A549 (cell line): ENCODE measurements at regions of chr2 and their contacts with region 1.

Region 1: GRCh38 chr2:85302121-85302520 is 25.7 kb downstream of the TGOLN2 start:
- DNase-seq: no peak
- ATAC-seq: no peak; a peak in 1 of 6 replicates
- H3K4me3 ChIP-seq: no peak overlapping the region
- H3K27ac ChIP-seq: no peak overlapping the region
- H3K4me1 ChIP-seq: no peaks in the 10 kb centered on the region
- CTCF ChIP-seq: no peak
- EP300 ChIP-seq: no peak
- POLR2A ChIP-seq: no peak
- RAD21 ChIP-seq: no peak

Region 2: DNA sequence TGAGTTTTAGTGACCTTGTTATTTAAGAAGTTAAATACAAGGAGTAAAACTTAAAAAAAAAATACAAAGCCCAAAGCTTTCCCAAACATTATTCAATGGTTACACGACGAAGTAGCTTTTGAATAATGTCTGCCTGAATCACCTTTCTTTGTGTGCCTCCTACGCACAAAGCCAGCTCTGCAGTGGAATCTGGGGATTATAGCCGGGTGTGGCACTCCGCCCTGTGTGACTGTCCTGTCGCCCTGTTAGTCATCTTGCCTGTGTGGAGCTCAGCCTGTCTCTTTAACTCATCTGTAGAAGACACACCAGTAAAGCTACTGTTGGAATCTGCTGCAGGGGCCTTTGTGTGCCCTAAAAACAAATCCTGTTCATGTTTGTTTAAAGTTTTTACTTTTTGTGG is 248.3 kb before region 1 on chr2:
- CTCF ChIA-PET with region 1: interaction called, 371 read pairs
- POLR2A ChIA-PET with region 1: interaction called, 4 read pairs
- DNase-seq: peak; percentile 60 to 83
- ATAC-seq: peak; percentile 81 to 88
- H3K4me3 ChIP-seq: no peak overlapping the region
- H3K27ac ChIP-seq: peak overlapping the region; percentile 44 to 53; a peak in 5 of 6 replicates
- H3K4me1 ChIP-seq: peaks cover 27% of the 10 kb centered on the region
- CTCF ChIP-seq: no peak
- EP300 ChIP-seq: no peak
- POLR2A ChIP-seq: no peak
- RAD21 ChIP-seq: no peak

Region 3: GRCh38 chr2:85132834-85133637 is 169.1 kb before region 1 on chr2 and contains the start of gene TCF7L1:
- CTCF ChIA-PET with region 1: interaction called, 59 read pairs
- POLR2A ChIA-PET with region 1: no interaction called
- DNase-seq: peak; percentile 89 to 93
- ATAC-seq: peak; percentile 87 to 96
- H3K4me3 ChIP-seq: peak within 1 kb of the TSS; percentile 61
- H3K27ac ChIP-seq: peak within 1 kb of the TSS; percentile 76 to 90
- H3K4me1 ChIP-seq: peaks cover 9% of the 10 kb centered on the region
- CTCF ChIP-seq: peak; percentile 78
- EP300 ChIP-seq: no peak
- POLR2A ChIP-seq: peak; percentile 70
- RAD21 ChIP-seq: peak; percentile 72 to 86
- polyA plus RNA-seq, gene TCF7L1: 0.68 and 0.95 TPM in 2 replicates

Region 4: DNA sequence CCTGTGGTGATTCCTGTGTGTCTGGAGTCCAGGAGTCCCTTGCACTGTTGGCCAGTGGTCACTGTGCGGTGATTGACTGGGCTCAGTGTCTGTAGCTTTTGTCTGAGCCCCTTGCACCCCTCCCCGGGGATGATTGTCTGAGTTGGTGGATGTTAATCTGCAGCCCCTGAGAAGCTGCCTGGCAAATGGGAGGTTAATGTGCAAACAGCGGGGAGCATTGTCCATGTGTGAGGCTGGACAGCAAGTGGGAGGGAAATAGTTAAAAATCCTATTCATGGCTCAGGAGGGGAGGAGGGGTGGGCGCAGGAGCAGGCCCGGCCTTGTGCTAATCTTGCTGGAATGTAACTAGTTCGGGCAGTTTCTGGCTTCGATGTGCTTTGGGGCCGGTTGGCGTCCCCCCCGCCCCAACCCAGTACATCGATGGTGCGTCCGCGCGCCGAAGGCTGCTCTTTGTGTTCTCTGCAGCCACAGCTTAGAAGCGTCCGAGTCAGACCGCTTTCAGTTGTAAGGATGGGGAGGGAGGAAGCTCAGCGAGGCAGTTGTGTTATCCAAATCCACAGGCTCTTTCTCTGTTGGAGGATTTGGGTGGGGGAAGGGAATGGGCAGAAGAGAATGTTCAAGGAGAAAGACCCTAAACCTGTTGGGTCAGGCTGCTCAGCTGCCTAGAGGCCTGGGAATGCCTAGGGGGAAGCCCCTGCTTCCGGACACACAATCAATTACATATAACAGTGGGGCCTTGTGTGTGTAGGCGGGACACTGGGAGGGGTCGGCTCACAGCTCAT is 46.1 kb before region 1 on chr2:
- CTCF ChIA-PET with region 1: interaction called, 22 read pairs
- POLR2A ChIA-PET with region 1: no interaction called
- DNase-seq: no peak
- ATAC-seq: no peak
- H3K4me3 ChIP-seq: no peak overlapping the region
- H3K27ac ChIP-seq: no peak overlapping the region
- H3K4me1 ChIP-seq: no peaks in the 10 kb centered on the region; the same call in 2 of the 3 replicates
- CTCF ChIP-seq: no peak
- EP300 ChIP-seq: no peak
- POLR2A ChIP-seq: no peak
- RAD21 ChIP-seq: no peak

Region 5: DNA sequence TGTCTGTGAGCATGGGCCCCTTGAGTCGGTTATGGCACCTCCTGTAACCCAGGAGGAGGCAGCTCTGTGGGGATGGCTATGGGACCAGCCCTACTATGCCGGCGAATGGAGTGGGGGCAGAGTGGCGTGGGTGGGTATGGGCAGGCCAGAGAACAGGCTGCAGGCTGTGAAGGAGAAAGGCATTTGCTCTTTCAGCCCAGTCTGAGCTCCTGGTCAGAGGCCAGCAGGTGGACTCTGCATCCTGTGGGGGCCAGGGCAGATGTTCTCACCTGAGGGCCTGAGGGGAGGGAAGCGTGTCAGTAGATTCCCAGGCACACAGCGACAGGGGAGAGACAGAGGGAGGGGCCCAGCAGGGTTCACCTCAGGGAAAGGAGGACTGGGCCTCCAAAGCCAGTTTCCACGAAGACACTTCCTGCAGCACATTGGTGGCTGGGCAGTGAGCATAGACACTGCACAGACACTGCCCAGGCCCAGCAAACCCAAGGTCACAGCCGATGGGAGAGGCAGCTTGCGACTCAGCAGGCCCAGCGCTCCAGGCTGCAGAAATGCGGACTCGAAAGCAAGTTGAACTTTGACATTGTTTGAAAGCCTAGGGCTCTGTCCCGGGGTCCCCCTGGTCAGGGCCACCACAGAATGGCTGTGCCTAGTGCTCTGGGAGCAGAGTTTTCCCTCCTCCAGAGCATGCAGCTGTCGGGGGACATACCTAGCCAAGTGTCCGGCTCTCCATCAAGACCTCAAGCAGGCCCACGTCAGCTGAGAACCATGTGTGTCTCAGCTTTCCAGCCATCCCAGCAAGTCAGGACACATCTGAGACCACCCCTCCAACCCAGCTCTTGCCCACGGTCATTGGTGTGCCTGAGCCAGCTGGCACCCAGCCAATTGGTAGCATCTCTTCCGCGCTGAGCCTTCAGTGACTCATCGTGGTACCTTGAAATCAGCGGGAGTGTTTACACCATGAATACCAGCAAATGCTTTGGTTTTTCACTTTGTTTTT is 28.1 kb before region 1 on chr2:
- CTCF ChIA-PET with region 1: interaction called, 56 read pairs
- POLR2A ChIA-PET with region 1: no interaction called
- DNase-seq: peak in 1 of 2 experiments; percentile 62
- ATAC-seq: peak; percentile 67 to 69
- H3K4me3 ChIP-seq: no peak overlapping the region
- H3K27ac ChIP-seq: no peak overlapping the region
- H3K4me1 ChIP-seq: peaks cover 13% of the 10 kb centered on the region
- CTCF ChIP-seq: no peak
- EP300 ChIP-seq: no peak
- POLR2A ChIP-seq: no peak
- RAD21 ChIP-seq: no peak

Region 6: DNA sequence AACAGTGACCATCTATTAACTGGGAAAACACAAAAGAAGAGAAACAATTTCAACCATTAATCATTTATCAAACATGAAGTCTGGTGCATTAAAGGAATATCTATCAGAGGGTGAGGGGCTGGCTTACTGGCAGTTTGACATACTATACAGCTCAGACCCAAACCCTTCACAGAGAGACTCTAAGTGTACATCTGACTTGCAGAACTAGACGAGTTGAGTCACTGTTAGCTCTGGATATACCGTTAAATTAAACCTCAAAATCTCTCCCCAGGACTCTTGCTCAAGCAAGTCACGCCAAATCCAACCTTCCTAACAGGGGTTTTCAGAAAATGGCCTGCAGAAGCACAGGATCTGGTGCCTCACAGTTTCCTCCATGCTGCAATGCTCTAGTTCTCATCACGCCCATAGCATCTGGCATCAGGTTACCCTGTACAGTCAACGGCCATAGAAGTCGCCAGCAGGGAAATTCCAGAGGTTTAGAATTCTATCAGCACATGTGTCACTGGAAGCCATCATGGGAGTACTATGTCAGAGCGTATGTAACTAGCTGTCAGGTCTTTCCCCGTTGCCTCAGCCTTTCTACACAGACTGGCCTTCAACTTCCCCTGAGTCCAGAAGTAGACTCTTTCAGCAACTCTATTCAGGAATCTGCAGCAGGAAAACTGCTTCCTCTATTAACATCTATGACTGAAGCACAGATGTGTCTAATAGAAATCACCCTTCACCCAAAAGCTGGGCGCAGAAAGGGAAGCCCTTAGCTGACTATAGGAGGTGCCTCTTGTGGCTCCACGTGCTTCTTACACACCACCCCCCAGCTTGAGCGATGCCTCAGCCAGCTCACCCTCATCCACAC is 16.3 kb after region 1 on chr2:
- CTCF ChIA-PET with region 1: interaction called, 48 read pairs
- POLR2A ChIA-PET with region 1: interaction called, 3 read pairs
- DNase-seq: no peak
- ATAC-seq: peak in 1 of 2 experiments; percentile 21; a peak in 1 of 6 replicates
- H3K4me3 ChIP-seq: no peak overlapping the region
- H3K27ac ChIP-seq: no peak overlapping the region
- H3K4me1 ChIP-seq: no peaks in the 10 kb centered on the region
- CTCF ChIP-seq: no peak
- EP300 ChIP-seq: no peak
- POLR2A ChIP-seq: no peak
- RAD21 ChIP-seq: no peak

Region 7: GRCh38 chr2:85409845-85410583 is 107.9 kb after region 1 on chr2 and contains the start of gene CAPG:
- CTCF ChIA-PET with region 1: no interaction called
- POLR2A ChIA-PET with region 1: no interaction called
- DNase-seq: peak in 1 of 2 experiments; percentile 55
- ATAC-seq: peak; percentile 31 to 59; a peak in 4 of 6 replicates
- H3K4me3 ChIP-seq: no peak within 1 kb of the TSS
- H3K27ac ChIP-seq: peak within 1 kb of the TSS; percentile 52 to 78
- H3K4me1 ChIP-seq: peaks cover 38% of the 10 kb centered on the region
- CTCF ChIP-seq: no peak
- EP300 ChIP-seq: no peak
- POLR2A ChIP-seq: peak; percentile 26
- RAD21 ChIP-seq: no peak
- polyA plus RNA-seq, gene CAPG: 81.0 and 94.6 TPM in 2 replicates

Region 8: GRCh38 chr2:85420536-85421259 is 118.6 kb after region 1 on chr2:
- CTCF ChIA-PET with region 1: no interaction called
- POLR2A ChIA-PET with region 1: no interaction called
- DNase-seq: peak; percentile 92 to 97
- ATAC-seq: peak; percentile 57 to 70
- H3K4me3 ChIP-seq: peak overlapping the region; percentile 16; the same call in 1 of the 3 replicates
- H3K27ac ChIP-seq: peak overlapping the region; percentile 96 to 98
- H3K4me1 ChIP-seq: peaks cover 44% of the 10 kb centered on the region
- CTCF ChIP-seq: peak; percentile 99
- EP300 ChIP-seq: no peak
- POLR2A ChIP-seq: no peak
- RAD21 ChIP-seq: peak; percentile 100

Region 9: DNA sequence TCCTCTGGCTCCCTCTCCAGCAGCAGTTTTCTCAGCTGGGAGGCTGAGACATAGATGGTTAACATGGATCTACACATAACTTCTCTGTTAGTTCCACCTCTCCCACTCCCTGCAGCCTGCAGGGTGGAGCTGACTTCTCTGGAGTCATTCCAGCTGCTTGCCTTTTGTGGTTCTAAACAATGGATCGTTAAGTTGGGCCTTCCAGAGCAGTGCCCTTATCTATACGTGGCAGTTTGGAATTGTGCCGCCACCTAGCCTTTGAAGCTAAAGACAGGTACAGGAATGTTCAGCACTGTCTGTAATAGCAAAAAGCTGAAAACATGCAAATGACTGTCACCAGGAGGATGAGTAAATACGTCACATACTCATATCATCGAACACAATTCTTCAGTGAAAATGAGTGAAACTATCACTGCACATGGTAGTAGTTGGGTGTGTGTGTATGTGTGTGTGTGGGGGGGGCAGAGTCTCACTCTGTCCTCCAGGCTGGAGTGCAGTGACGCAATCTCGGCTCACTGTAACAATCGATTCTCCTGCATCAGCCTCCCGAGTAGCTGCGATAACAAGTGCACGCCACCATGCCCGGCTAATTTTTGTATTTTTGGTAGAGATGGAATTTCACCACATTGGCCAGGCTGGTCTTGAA is 166.7 kb after region 1 on chr2:
- CTCF ChIA-PET with region 1: no interaction called
- POLR2A ChIA-PET with region 1: no interaction called
- DNase-seq: peak; percentile 69 to 82
- ATAC-seq: peak; percentile 82 to 83
- H3K4me3 ChIP-seq: no peak overlapping the region
- H3K27ac ChIP-seq: peak overlapping the region; percentile 81 to 86
- H3K4me1 ChIP-seq: peaks cover 66% of the 10 kb centered on the region
- CTCF ChIP-seq: no peak
- EP300 ChIP-seq: no peak
- POLR2A ChIP-seq: no peak
- RAD21 ChIP-seq: peak in 1 of 2 experiments; percentile 8; a peak in 2 of 5 replicates